Astrocyte of the cerebellum (primary cell): ENCODE measurements at regions of chr7 and their contacts with region 1.

Region 1: GRCh38 chr7:3892157-3892556 is 591.1 kb downstream of the SDK1 start:
- DNase-seq: no peak
- H3K4me3 ChIP-seq: no peak overlapping the region
- CTCF ChIP-seq: no peak

Region 2: DNA sequence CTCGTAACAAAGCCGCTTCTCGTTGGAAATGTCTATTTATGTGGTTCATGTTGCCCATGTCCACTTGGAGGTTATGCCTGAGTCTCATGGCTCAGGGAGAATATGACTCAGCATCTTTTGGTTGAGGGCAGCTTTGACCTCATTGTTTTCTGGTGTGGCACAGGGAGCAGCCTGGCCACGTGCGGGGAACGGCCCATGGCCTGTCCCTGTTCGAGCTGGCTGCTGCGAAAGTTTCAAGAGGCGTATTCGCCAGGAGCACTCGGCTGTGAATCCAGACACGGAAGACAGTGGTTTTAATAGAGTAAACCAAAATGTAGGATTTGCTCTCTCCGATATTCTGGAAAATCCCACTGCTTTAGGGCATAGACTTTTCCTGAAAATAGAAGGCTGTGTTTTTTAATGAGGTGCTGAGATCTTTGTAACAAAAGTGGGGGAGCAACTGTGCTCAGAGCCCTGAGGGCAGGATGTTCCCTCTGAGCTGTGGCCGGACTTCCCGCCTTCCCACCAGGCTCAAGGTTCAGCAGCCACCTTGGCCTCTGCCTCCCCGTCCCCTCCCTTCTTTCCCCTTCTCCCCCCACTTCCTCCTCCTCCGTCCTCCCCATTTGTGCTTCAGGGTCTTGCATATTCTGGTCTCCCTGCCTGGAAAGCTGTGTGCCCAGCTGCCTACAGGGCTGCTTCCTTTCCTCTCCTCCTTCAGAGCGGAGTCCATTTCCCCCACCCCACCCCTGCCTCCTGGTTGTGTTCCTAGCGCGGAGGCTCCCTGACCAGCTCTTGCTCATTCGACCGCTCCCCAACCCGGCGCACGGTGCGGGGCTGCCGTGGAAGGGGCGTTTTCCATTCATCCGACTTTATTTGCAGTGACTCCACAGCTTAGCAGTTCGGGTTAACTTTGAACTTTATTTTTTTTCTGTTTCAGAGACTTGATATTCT is 50.9 kb after region 1 on chr7:
- in situ Hi-C with region 1: loop called (anchors 5 kb)
- DNase-seq: no peak
- H3K4me3 ChIP-seq: no peak overlapping the region
- CTCF ChIP-seq: no peak